MCF 10A (cell line): ENCODE measurements at regions of chr4 and their contacts with region 1.

Region 1: DNA sequence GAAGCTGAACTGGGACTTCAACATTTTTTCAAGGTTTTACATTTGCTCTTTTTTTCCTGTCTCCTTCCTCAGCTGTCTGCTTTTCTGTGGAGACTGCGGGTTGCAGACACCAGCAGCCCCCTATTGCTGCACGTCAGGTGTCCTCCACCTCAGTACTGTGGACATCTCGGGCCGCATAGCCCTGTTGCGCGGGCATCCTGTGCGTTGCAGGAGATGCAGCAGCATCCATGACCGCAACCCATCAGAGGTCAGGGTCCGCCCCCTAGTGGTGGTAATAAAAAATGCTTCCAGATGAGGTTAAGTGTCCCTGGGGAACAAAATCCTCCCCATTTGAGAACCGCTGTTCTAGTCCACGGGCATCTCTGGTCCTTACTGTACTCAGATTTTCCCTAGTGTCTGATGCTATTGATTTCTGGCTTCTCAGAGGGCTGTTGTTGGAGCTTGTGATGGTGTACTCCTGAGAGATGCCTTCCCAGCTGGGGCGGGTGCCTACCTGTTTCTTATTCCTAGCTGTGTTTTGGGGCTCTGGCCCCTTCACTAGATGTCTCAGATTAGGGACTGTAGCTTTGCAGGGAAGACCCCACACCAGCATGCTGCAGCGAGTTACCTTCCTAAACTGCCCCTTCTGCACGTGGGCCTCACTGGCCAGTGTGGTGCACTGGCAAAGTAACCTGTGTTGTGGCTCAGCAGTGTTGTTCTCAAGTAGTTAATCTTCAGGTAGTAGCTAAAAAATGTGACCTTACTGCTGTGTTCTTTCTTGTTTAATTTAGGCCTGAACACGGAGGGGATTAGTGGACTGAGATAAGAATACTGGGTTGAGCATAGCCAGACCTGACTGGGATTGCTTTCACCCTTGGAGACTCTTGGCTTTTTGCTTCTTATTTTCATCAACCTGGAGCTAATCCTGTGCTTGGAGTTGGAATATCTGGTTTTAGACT is 28.2 kb downstream of the NSD2 start:
- DNase-seq: peak; percentile 80
- H3K4me3 Mint-ChIP-seq: no peak overlapping the region
- H3K27ac Mint-ChIP-seq: no peak overlapping the region
- H3K4me1 Mint-ChIP-seq: peaks cover 13% of the 10 kb centered on the region
- H3K27me3 Mint-ChIP-seq: no peaks in the 10 kb centered on the region
- CTCF ChIP-seq: peak; percentile 94

Region 2: GRCh38 chr4:1752284-1753041 is 147.0 kb before region 1 on chr4:
- CTCF ChIA-PET with region 1: interaction called, 19 read pairs
- POLR2A ChIA-PET with region 1: no interaction called
- intact Hi-C with region 1: loop called (anchors 2 kb)
- DNase-seq: peak; percentile 70
- H3K4me3 Mint-ChIP-seq: no peak overlapping the region
- H3K27ac Mint-ChIP-seq: no peak overlapping the region
- H3K4me1 Mint-ChIP-seq: no peaks in the 10 kb centered on the region
- H3K27me3 Mint-ChIP-seq: no peaks in the 10 kb centered on the region
- CTCF ChIP-seq: no peak

Region 3: GRCh38 chr4:1846580-1846979 is 52.8 kb before region 1 on chr4:
- CTCF ChIA-PET with region 1: interaction called, 13 read pairs
- POLR2A ChIA-PET with region 1: no interaction called
- intact Hi-C with region 1: no loop called
- DNase-seq: no peak
- H3K4me3 Mint-ChIP-seq: no peak overlapping the region
- H3K27ac Mint-ChIP-seq: no peak overlapping the region
- H3K4me1 Mint-ChIP-seq: peaks cover under 1% of the 10 kb centered on the region
- H3K27me3 Mint-ChIP-seq: no peaks in the 10 kb centered on the region
- CTCF ChIP-seq: no peak

Region 4: DNA sequence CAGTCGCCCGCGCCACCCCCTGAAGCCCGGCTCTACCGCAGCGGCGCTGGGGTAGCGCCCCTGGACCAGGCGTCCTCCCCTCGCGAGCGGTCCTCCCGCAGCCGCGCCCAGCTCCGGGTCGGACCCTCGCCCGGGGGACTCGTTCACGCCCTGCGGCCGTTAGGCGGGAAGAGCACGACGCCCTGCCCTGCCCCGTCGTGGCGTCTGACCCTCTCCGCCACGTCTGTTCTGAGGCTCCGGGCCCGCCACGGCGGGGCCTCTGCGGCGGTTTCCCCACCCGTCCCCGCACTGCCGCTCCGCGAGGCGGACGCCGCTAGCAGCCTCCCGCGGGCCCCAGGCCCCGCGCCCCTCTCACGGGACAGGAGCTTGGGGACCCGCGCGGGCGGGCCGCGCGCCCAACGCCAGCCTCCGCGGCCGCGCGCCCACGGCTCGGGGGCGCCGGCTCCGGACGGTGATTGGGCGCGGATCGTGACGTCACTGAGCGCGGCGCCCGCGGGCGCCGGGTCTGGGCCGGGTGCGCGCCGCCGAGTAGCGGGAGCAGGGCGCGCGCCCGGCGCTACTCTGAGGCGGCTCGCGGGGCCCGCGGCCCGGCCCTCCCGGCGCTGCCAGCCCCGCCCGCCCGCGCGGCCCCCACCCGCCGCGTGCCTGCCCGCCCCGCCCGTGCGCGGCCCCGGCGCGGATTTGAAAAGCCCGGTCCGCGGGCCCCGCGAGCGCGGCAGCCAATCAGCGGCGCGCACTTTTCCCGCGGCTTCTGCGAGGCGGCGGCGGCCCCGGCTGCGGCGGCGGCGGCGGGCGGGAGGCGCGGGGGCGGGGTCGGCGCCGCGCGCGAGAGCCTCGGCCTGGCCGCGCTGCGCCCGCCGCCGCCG is 28.6 kb before region 1 on chr4 and contains the start of gene NSD2:
- CTCF ChIA-PET with region 1: interaction called, 27 read pairs
- POLR2A ChIA-PET with region 1: interaction called, 7 read pairs
- intact Hi-C with region 1: loop called (anchors 2 kb)
- DNase-seq: peak; percentile 82
- H3K4me3 Mint-ChIP-seq: peak within 1 kb of the TSS; percentile 88
- H3K27ac Mint-ChIP-seq: peak within 1 kb of the TSS; percentile 82
- H3K4me1 Mint-ChIP-seq: peaks cover 21% of the 10 kb centered on the region
- H3K27me3 Mint-ChIP-seq: no peaks in the 10 kb centered on the region
- CTCF ChIP-seq: no peak
- total RNA-seq, gene NSD2: 100 and 109 TPM in 2 replicates

Region 5: DNA sequence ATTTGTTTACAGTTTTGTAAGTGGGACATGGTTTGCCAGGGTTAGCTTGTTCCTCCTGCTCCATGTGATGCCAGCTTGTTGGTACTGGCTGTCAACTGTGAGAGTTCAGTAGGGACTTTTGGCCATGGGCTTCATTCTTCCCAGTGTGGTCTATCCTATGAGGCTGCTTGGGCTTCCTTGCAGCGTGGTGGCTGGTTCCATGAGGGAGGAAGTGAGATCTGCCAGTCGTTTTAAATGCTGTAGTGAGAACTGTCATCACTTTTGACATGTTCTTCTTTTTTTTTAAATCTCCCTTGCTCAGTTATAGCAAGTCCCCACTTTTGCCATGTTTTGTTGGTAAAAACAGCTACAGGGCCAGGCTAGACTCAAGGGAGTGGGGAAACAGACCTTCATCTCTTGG is 12.4 kb before region 1 on chr4:
- CTCF ChIA-PET with region 1: interaction called, 74 read pairs
- POLR2A ChIA-PET with region 1: interaction called, 4 read pairs
- intact Hi-C with region 1: no loop called
- DNase-seq: no peak
- H3K4me3 Mint-ChIP-seq: no peak overlapping the region
- H3K27ac Mint-ChIP-seq: peak overlapping the region; percentile 60
- H3K4me1 Mint-ChIP-seq: peaks cover 10% of the 10 kb centered on the region
- H3K27me3 Mint-ChIP-seq: no peaks in the 10 kb centered on the region
- CTCF ChIP-seq: no peak

Region 6: GRCh38 chr4:1922821-1923220 is 23.4 kb after region 1 on chr4:
- CTCF ChIA-PET with region 1: interaction called, 11 read pairs
- POLR2A ChIA-PET with region 1: interaction called, 4 read pairs
- intact Hi-C with region 1: no loop called
- DNase-seq: no peak
- H3K4me3 Mint-ChIP-seq: no peak overlapping the region
- H3K27ac Mint-ChIP-seq: no peak overlapping the region
- H3K4me1 Mint-ChIP-seq: no peaks in the 10 kb centered on the region
- H3K27me3 Mint-ChIP-seq: no peaks in the 10 kb centered on the region
- CTCF ChIP-seq: no peak